IMR-90 (cell line): ENCODE measurements at regions of chr15 and their contacts with region 1.

Region 1: GRCh38 chr15:52642386-52643361 is 36.5 kb downstream of the ATOSA start:
- DNase-seq: peak; percentile 83
- ATAC-seq: peak; percentile 96
- H3K4me3 ChIP-seq: no peak overlapping the region
- H3K27ac ChIP-seq: peak overlapping the region; percentile 66
- H3K4me1 ChIP-seq: peaks cover 6% of the 10 kb centered on the region
- H3K27me3 ChIP-seq: no peaks in the 10 kb centered on the region
- CTCF ChIP-seq: no peak
- POLR2A ChIP-seq: no peak
- RAD21 ChIP-seq: no peak

Region 2: GRCh38 chr15:51750792-51751685 is 891.6 kb before region 1 on chr15 and contains the start of gene TMOD2:
- CTCF ChIA-PET with region 1: no interaction called
- POLR2A ChIA-PET with region 1: no interaction called
- dilution Hi-C with region 1: no loop called
- in situ Hi-C with region 1: no loop called
- intact Hi-C with region 1: no loop called
- DNase-seq: peak; percentile 26
- ATAC-seq: peak; percentile 96
- H3K4me3 ChIP-seq: peak within 1 kb of the TSS; percentile 67
- H3K27ac ChIP-seq: no peak within 1 kb of the TSS; the same call in 1 of the 2 replicates
- H3K4me1 ChIP-seq: 0 out of 2 replicates have a peak, but pooled peaks cover 4% of the 10 kb centered on the region
- H3K27me3 ChIP-seq: peaks cover 28% of the 10 kb centered on the region
- CTCF ChIP-seq: no peak
- POLR2A ChIP-seq: no peak
- RAD21 ChIP-seq: no peak
- total RNA-seq, gene TMOD2: 5.4 and 6.9 TPM in 2 replicates

Region 3: DNA sequence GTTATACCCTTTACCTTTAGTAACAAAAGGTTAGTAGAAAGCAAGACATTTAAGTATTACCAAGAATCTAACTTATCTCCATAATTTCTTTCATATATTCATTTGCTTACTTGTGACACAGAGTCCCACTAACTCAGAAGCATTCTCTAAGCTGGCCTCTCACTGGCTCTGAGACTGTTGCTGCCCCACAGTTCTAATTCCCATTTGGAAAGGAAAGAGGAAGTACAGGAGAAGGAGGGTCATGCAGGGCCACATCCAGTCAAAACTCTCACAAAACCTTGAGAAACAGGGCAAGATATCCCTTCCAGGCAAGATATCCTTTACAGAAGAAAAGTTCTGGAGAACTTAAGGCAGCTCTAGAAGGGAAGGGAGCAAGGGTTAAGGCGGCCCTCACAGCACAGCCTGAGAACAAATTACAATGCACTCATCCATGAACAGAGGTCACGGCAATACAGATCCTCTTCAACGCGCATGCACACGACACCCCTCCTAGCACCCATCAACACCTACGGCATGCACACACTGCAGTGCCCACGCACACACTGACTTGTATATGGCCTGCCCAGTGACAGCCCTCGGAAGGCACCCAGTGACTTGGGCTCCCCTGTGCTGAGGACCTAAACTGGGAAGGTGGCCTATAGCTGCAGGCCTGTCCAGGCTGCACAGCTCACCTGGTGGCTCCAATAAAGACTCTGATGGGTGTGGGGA is 334.1 kb before region 1 on chr15:
- CTCF ChIA-PET with region 1: no interaction called
- POLR2A ChIA-PET with region 1: no interaction called
- dilution Hi-C with region 1: no loop called
- in situ Hi-C with region 1: no loop called
- intact Hi-C with region 1: no loop called
- DNase-seq: no peak
- ATAC-seq: no peak
- H3K4me3 ChIP-seq: no peak overlapping the region
- H3K27ac ChIP-seq: no peak overlapping the region
- H3K4me1 ChIP-seq: no peaks in the 10 kb centered on the region; the same call in 1 of the 2 replicates
- H3K27me3 ChIP-seq: no peaks in the 10 kb centered on the region
- CTCF ChIP-seq: no peak
- POLR2A ChIP-seq: no peak
- RAD21 ChIP-seq: no peak

Region 4: DNA sequence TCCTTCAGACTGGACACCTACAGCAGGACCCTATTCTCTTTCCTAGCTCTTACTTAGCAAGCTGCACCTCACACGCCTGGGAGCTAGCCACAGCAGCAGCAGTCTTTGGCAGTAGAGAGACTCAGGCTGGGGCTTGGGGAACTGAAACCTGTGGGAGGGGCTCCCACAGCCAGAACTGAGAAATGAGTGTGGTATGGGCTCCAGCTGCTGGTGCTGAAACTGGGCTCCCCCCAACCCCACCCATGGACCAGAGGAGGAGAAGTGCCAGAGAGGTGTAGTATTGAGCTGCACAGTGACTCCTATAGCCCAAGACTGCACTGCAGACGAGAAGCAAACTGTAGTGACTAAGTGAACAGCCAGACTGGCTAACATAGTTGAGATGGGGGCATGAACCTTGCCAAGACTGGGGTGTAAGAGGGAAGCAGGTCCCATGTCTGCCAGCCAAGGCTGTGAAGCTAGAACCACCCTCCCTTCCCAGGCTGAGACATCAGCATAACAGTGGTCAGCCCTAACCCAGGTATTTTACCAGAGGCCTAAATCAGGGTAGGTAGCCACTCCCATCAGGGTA is 176.5 kb before region 1 on chr15:
- CTCF ChIA-PET with region 1: no interaction called
- POLR2A ChIA-PET with region 1: no interaction called
- dilution Hi-C with region 1: no loop called
- in situ Hi-C with region 1: no loop called
- intact Hi-C with region 1: no loop called
- DNase-seq: no peak
- ATAC-seq: no peak
- H3K4me3 ChIP-seq: no peak overlapping the region
- H3K27ac ChIP-seq: no peak overlapping the region
- H3K4me1 ChIP-seq: peaks cover 7% of the 10 kb centered on the region
- H3K27me3 ChIP-seq: no peaks in the 10 kb centered on the region
- CTCF ChIP-seq: no peak
- POLR2A ChIP-seq: no peak
- RAD21 ChIP-seq: no peak

Region 5: GRCh38 chr15:52563604-52564003 is 79.1 kb before region 1 on chr15:
- CTCF ChIA-PET with region 1: no interaction called
- POLR2A ChIA-PET with region 1: no interaction called
- dilution Hi-C with region 1: no loop called
- in situ Hi-C with region 1: no loop called
- intact Hi-C with region 1: loop called (anchors 2 kb)
- DNase-seq: no peak
- ATAC-seq: no peak
- H3K4me3 ChIP-seq: no peak overlapping the region
- H3K27ac ChIP-seq: no peak overlapping the region
- H3K4me1 ChIP-seq: peaks cover 17% of the 10 kb centered on the region
- H3K27me3 ChIP-seq: no peaks in the 10 kb centered on the region
- CTCF ChIP-seq: no peak
- POLR2A ChIP-seq: no peak
- RAD21 ChIP-seq: no peak

Region 6: DNA sequence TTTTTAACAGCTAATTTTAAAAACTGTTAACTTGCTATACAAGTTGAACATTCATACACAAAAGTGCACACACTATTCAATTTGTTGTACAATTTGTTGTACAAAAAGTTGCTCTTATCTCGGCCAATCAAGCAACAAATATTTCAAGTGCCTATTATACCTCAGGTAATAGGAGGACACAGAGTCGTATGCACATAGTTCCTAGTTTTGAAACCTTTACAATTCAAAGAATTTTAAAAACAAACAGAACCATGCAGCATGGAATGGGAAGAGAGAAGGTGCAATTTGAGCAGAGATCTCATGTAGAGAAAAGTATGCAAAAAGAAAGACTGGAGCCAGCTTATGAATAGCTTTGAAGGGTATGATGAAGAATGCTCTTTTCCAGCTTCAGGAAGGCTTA is 27.4 kb before region 1 on chr15:
- CTCF ChIA-PET with region 1: no interaction called
- POLR2A ChIA-PET with region 1: no interaction called
- dilution Hi-C with region 1: no loop called
- in situ Hi-C with region 1: no loop called
- intact Hi-C with region 1: no loop called
- DNase-seq: no peak
- ATAC-seq: no peak; the same call in 1 of the 2 replicates
- H3K4me3 ChIP-seq: no peak overlapping the region
- H3K27ac ChIP-seq: no peak overlapping the region
- H3K4me1 ChIP-seq: no peaks in the 10 kb centered on the region
- H3K27me3 ChIP-seq: no peaks in the 10 kb centered on the region
- CTCF ChIP-seq: no peak
- POLR2A ChIP-seq: no peak
- RAD21 ChIP-seq: no peak